ENCODE measurements at regions of chr5 and their contacts with region 1.

Region 1: DNA sequence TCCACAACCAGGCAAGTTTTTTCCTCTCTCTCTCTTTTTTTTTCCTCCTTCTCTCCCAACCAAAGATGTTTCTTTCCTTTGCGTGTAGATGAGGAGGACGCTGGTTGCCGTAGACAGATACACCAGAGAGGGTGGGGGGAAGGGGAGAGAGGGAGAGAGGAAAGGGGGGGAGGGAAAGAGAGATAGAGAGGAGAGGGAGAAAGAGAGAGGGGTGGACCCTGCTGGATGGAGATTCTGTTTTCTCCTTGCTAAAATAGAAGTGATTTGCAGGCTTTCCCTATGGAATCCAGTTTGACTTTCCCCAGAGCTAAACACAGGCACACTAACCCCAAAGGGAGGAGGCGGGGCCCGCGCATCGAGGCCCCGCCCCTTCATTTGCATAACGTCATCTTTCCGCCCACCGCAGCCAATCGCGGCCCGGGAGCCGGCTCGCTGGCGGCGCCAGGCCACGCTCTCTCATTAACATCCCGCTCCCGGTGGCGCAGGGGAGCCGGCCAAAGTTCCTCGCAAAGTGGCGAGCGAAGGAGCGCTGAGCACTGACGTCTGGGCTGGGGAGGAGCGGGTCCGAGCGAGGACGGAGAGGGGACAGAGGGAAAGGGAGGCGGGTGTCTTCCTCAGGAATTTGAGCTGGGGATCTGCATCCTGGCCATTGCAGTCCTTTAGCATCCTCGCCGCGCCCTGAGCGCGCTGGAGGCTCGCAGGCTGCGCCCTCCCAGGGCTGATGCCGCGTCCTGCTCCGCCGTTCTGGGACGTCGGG is 487 bp upstream of the EBF1 start:
- DNase-seq: peak; percentile 94
- ATAC-seq: peak; percentile 94

Region 2: GRCh38 chr5:158695595-158696330 is 404.4 kb before region 1 on chr5:
- intact Hi-C with region 1: loop called (anchors 5 kb)
- DNase-seq: peak; percentile 86
- ATAC-seq: peak; percentile 84

Region 3: GRCh38 chr5:158967541-158967940 is 132.7 kb before region 1 on chr5:
- intact Hi-C with region 1: loop called (anchors 10 kb)
- DNase-seq: no peak
- ATAC-seq: peak; percentile 81

Measured in sciatic nerve (tissue), 2 donors.